B cell (primary cell): ENCODE measurements at regions of chr2 and their contacts with region 1.

Region 1: GRCh38 chr2:229815858-229816257 is 101.5 kb upstream of the DNER start:
- DNase-seq: no peak
- ATAC-seq: no peak
- H3K4me3 ChIP-seq: no peak overlapping the region
- H3K4me3 Mint-ChIP-seq: no peak overlapping the region
- H3K27ac ChIP-seq: no peak overlapping the region
- H3K27ac Mint-ChIP-seq: no peak overlapping the region
- H3K4me1 ChIP-seq: no peaks in the 10 kb centered on the region
- H3K4me1 Mint-ChIP-seq: peaks cover 6% of the 10 kb centered on the region
- H3K27me3 ChIP-seq: no peaks in the 10 kb centered on the region
- H3K27me3 Mint-ChIP-seq: no peaks in the 10 kb centered on the region
- CTCF ChIP-seq: no peak

Region 2: GRCh38 chr2:229348128-229348527 is 467.7 kb before region 1 on chr2:
- CTCF ChIA-PET with region 1: no interaction called
- POLR2A ChIA-PET with region 1: no interaction called
- intact Hi-C with region 1: no loop called
- DNase-seq: no peak
- ATAC-seq: no peak
- H3K4me3 ChIP-seq: no peak overlapping the region
- H3K4me3 Mint-ChIP-seq: no peak overlapping the region
- H3K27ac ChIP-seq: no peak overlapping the region
- H3K27ac Mint-ChIP-seq: no peak overlapping the region
- H3K4me1 ChIP-seq: no peaks in the 10 kb centered on the region
- H3K4me1 Mint-ChIP-seq: no peaks in the 10 kb centered on the region
- H3K27me3 ChIP-seq: no peaks in the 10 kb centered on the region
- H3K27me3 Mint-ChIP-seq: peaks cover 4% of the 10 kb centered on the region
- CTCF ChIP-seq: no peak

Region 3: DNA sequence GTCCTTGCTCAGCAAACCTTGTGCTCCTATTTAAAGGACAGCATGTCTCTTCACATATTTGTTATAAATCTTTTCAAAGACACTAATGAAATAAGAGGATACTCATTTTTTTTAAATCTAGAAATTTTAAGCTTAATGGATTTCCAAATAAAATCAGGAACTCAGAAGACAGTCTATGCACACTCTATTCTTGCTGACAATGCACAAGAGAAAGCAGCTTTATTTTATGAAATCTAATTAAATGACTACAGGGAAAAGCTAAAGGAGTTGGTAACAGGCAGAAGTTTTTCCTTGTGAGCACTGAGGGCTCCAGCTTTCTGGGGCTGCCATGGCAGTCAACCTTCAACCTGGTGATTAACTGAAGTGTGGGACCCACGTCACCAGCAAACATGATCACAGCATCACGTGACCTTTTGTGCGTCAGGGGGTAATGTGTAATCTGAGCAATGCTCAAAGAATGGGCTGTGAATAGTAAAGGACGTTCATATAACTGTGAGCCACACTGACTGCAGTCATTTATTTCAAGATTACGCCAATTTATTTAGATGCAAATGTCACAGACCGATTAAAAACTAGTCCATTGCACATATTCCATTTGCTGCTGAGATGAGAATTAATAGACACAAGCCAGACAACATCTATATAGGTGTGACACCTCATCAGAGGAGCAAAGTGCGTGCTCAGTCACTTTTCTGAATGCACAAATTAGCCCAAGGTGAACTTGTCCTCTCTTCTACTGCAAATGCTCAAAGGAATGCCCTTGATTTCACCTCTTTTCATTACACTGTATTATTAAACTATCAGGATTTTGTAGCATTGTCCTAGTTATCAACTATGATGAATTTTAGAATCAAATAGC is 89.9 kb before region 1 on chr2:
- CTCF ChIA-PET with region 1: no interaction called
- POLR2A ChIA-PET with region 1: no interaction called
- intact Hi-C with region 1: no loop called
- DNase-seq: no peak
- ATAC-seq: no peak
- H3K4me3 ChIP-seq: no peak overlapping the region
- H3K4me3 Mint-ChIP-seq: no peak overlapping the region
- H3K27ac ChIP-seq: no peak overlapping the region
- H3K27ac Mint-ChIP-seq: no peak overlapping the region
- H3K4me1 ChIP-seq: no peaks in the 10 kb centered on the region
- H3K4me1 Mint-ChIP-seq: no peaks in the 10 kb centered on the region
- H3K27me3 ChIP-seq: no peaks in the 10 kb centered on the region
- H3K27me3 Mint-ChIP-seq: peaks cover 35% of the 10 kb centered on the region
- CTCF ChIP-seq: no peak

Region 4: GRCh38 chr2:229780856-229781773 is 34.7 kb before region 1 on chr2:
- CTCF ChIA-PET with region 1: interaction called, 11 read pairs
- POLR2A ChIA-PET with region 1: no interaction called
- intact Hi-C with region 1: no loop called
- DNase-seq: peak; percentile 52
- ATAC-seq: peak; percentile 70
- H3K4me3 ChIP-seq: no peak overlapping the region
- H3K4me3 Mint-ChIP-seq: no peak overlapping the region
- H3K27ac ChIP-seq: peak overlapping the region in 1 of 2 donors; percentile 28
- H3K27ac Mint-ChIP-seq: peak overlapping the region; percentile 26
- H3K4me1 ChIP-seq: peaks cover 7 to 11% of the 10 kb centered on the region in 2 donors
- H3K4me1 Mint-ChIP-seq: peaks cover 19% of the 10 kb centered on the region
- H3K27me3 ChIP-seq: no peaks in the 10 kb centered on the region
- H3K27me3 Mint-ChIP-seq: no peaks in the 10 kb centered on the region
- CTCF ChIP-seq: peak; percentile 97